Right ventricle myocardium inferior (tissue), 1 donor: ENCODE measurements at regions of chr4 and their contacts with region 1.

Region 1: DNA sequence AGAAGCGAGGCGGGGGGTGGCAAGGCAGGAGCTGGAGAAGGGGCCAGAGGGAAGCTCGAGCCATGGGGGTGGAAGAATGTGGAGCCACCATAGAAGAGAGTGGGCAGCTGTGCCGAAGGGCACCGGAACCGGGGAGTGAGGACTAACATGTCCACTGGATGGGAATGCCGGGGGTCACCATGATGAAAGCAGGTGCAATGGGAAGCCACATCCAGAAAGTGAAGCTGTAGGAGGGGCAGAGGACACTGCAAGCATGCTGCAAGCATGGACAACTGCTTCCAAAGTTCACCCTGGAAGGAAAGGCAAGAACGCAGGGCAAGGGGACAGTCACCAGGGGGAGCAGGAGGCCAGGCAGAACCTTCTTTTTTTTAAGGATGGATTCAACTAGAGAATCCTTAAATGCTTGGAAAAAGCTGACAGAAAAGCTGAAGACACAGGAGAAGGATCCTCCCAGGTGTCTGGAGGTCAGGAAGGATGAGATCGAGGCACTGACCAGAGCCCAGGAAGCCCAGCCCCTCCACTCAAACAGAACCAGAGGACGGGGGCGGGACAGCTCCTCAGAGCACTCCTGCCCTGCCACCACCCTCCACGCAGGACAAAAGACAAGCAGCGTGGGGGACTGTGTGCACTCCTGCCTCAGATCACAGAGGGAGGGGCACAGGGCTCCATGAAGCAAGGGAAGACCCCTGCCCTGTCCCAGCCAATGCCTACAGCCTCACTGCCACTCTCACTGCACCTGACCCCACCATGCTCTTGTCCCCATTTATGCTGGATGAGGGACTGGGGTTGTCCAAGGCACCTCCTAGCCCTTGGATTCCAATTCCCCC is 169.2 kb downstream of the AFAP1 start:
- DNase-seq: no peak
- ATAC-seq: no peak

Region 2: DNA sequence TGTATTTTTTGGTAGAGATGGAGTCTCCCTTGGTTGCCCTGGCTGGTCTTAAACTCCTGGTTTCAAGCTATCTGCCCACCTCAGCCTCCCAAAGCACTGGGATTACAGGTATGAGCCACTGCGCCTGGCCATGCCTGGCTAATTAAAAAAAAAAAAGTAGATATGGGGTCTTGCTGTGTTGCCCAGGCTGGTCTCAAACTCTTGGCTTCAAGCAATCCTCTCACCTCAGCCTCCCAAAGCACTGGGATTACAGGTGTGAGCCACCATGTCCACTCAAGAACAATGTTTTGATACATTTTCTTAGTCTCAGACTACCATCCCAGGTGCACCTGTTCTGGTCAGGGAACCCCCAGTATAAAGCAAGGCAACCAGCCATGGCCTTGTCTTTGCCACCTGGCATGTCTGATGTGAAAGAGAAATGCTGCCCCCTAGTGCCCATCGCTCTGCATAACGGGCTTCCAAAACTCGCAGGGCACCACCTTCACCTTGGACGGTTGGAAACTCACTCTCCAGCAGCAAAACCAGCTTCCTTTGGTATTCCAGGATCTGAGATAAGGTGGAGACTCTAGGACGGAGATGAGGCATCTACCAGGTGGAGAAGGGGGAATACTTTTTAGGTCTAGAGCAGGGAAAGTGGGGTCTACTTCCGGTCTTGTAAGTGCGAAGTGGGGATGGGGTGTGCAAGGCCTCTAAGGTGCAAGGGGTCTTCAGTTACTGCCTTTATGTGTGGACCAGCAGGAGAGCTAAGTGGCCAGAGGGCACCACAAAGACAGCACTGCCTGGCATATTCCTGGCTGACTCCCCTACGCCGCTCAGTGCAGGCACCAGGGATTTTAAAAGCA is 216.9 kb after region 1 on chr4:
- intact Hi-C with region 1: loop called (anchors 2 kb)
- DNase-seq: peak; percentile 20
- ATAC-seq: peak; percentile 63